ENCODE measurements at regions of chr6 and their contacts with region 1.

Region 1: DNA sequence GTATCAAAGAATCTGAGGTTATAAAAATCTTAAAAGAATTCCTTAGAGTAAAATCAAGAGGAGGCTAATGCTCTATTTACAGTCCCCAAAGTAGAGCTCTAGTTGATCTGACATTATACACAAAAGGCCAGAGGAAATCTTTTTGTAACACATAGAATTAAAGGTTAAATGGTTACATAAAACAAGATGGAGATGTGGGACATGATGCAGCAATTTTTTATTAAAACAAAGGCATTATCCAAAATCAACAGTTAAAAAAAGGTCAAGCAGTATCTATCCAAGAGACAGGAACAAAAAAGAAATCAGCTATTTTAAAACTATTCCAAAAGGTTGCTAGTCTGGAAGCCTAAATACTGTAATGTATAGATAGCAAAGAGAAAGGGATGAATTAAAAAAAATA is 20.4 kb downstream of the ELOVL5 start:
- DNase-seq: no peak
- ATAC-seq: no peak
- H3K4me3 ChIP-seq: no peak overlapping the region
- H3K27ac ChIP-seq: peak overlapping the region in 1 of 12 donors; percentile 81
- H3K4me1 ChIP-seq: peaks cover 0 to 64% (median 32%) of the 10 kb centered on the region in 12 donors
- H3K27me3 ChIP-seq: no peaks in the 10 kb centered on the region
- CTCF ChIP-seq: no peak
- POLR2A ChIP-seq: no peak

Region 2: GRCh38 chr6:53313784-53314400 is 14.5 kb before region 1 on chr6:
- intact Hi-C with region 1: loop called in 1 of 10 experiments (anchors 2 kb)
- DNase-seq: no peak
- ATAC-seq: peak in 2 of 4 donors; percentile 52 to 70
- H3K4me3 ChIP-seq: no peak overlapping the region
- H3K27ac ChIP-seq: peak overlapping the region in 2 of 12 donors; percentile 3 to 25
- H3K4me1 ChIP-seq: peaks cover 0 to 75% (median 32%) of the 10 kb centered on the region in 12 donors
- H3K27me3 ChIP-seq: no peaks in the 10 kb centered on the region
- CTCF ChIP-seq: no peak
- POLR2A ChIP-seq: no peak

Region 3: DNA sequence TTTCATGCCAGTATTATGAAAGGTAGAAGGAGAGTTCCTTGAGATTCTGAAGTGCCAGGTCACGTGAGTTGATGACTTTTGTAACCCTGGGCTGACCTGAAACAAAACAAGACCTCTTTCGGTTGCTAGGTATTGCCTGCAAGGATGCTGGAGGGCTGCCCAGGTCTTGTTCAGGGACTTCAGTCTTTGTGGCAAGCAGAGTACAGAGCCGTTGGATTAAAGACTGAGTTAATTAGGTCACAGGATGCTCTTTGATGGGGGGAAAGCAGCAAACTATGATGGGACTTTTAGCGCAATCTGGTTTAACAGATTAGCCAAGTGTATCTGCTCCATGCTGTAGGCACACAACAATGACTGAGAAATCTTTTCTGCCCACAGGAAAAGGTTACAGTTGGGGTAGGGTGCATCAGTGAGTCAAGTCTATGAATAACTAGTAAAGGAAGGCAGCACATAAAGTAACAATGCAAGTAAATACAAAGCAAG is 33.2 kb after region 1 on chr6:
- intact Hi-C with region 1: no loop called
- DNase-seq: peak in 3 of 5 donors; percentile 28 to 56 (median 35)
- ATAC-seq: no peak
- H3K4me3 ChIP-seq: no peak overlapping the region
- H3K27ac ChIP-seq: no peak overlapping the region
- H3K4me1 ChIP-seq: peaks cover 0 to 29% (median 10%) of the 10 kb centered on the region in 12 donors
- H3K27me3 ChIP-seq: no peaks in the 10 kb centered on the region
- CTCF ChIP-seq: no peak
- POLR2A ChIP-seq: no peak

Region 4: DNA sequence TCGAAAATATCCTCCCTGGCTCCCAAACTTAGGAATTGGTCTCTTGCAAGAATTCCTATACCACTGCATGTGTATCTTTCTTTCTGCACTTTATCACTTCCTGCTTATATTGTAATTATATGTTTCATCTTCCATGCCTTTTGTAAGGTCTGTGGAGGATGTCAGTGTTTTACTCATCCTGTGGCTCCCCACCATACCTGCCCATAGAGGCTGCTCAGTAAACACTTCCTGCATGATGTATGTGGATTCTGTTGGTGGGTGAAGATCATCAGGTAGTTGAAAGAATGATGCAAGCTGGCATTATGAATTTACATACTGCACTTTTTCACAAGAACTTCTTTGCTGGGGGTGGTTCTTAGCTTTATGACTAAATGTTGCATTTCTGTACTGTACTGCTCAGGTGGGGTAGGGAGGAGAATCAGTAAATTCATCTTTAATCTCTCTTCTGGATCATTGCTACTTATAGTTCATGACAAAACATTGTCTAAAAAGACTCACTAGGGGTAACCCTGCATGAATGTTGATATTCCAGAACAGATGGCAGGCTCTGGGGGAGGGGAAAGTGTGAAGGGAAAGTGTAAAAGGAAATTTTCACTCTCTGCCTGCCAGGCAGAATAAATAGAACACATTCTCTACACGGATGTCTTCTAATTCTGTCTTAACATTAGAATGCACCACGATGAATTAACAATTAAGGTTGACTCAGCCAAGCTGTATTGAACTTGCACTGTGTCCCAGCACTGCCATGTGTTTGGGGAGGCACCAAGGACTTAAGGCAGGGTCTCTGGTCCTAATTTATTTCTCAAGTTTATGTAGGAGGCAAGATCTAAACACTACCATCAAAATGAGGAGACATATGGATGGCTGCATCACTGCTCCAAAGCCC is 373.2 kb after region 1 on chr6:
- intact Hi-C with region 1: no loop called
- DNase-seq: no peak
- ATAC-seq: peak in 1 of 4 donors; percentile 15
- H3K4me3 ChIP-seq: no peak overlapping the region
- H3K27ac ChIP-seq: no peak overlapping the region
- H3K4me1 ChIP-seq: peaks cover 0 to 18% (median 2%) of the 10 kb centered on the region in 12 donors
- H3K27me3 ChIP-seq: no peaks in the 10 kb centered on the region
- CTCF ChIP-seq: no peak
- POLR2A ChIP-seq: no peak

Measured in heart left ventricle (tissue), 16 donors.